Prostate gland (tissue), 2 donors: ENCODE measurements at regions of chr2 and their contacts with region 1.

Region 1: DNA sequence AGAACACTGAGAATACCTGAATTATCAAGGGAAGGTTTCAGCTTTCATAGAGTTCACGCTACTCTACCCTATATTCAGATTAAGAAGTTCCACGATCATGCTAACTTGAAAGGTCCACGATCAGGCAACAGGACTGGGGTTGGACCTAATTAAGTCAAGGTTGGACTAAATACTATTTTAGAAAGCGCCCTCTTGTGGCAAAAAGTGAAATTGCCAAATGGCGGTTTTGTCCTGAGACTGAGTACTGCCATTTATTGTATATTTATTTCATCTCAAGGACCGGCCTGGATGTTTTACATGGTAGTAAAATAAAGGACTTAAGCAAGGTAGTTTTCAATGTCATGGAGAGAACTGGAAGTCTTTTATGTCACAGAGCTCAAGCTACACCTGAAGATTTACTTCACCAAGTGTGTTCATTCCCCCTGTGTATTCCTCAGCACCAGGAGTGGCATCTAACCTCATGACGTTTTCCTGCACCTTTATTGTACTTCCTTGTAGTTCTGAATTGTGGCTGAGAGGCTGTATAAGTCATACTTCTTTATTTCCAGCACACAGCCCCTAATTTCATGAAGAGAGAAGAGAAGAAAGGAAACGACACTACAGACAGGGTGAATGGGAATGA is 56.8 kb downstream of the SRD5A2 start:
- DNase-seq: no peak
- H3K4me3 ChIP-seq: no peak overlapping the region
- H3K27ac ChIP-seq: no peak overlapping the region
- H3K4me1 ChIP-seq: no peaks in the 10 kb centered on the region
- H3K27me3 ChIP-seq: no peaks in the 10 kb centered on the region
- CTCF ChIP-seq: peak in 3 of 4 experiments; percentile 40 to 56 (median 45)
- POLR2A ChIP-seq: no peak

Region 2: DNA sequence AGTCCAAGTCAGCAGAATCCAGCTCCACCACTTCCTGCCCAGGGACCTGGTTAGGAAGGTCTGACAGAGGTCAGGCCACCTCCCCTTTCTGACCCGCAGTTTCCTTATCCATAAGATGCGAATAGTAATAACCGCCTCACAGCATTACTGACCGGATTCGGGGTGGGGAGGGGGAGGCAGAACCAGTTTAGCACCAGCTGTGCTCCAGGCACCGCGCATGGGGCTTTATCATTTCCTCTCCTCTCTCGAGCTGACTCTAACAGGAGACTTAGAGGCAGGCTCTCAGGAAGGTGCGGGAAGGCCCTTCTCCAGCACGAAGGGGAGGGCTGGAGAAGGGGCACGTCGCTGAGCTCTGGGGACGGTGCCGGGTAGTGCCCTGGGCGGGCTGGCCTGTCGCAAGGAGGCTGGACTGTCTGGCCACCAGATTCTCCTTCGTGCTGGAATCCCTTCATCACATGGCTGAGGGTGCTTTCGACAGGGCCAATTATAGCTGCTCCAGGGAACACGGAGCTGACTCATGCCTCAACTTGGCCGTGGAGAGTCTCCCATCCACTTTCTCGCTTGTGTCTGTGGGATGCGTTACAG is 284.3 kb before region 1 on chr2:
- intact Hi-C with region 1: loop called (anchors 5 kb)
- DNase-seq: no peak
- H3K4me3 ChIP-seq: no peak overlapping the region
- H3K27ac ChIP-seq: peak overlapping the region; percentile 30 to 54
- H3K4me1 ChIP-seq: no peaks in the 10 kb centered on the region
- H3K27me3 ChIP-seq: no peaks in the 10 kb centered on the region
- CTCF ChIP-seq: no peak
- POLR2A ChIP-seq: no peak

Region 3: DNA sequence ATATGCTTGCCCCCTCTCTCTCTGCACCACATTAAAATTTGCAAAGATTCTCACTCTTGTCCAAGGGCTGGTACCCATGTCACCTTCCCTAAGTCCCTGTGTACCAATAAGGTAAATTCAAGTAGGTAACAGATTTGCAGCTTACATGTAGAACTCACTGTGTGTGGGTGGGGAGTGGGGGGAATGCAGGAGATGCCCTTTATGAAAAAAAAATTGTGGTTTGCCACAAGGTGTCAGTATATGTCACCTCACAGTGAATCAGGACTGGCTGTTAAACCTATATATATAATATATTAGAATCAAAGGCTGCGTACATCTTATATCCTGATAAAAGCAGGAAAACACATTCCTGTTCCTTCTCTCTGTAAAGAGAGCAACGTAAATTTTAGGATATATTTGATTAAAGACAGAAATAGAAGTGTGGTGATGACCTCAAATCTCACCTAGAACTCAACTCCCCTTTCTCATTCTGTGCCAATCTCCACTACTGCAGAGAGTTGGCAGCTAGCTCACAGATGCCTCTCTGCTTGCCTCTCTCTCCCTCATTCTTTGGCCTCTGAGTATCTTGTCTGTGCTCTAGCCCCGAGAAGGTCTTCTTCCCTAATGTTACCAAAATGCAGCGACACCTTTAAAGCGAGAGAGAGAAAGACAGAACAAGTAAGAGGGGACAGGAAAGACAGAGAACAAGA is 110.0 kb before region 1 on chr2:
- intact Hi-C with region 1: loop called (anchors 10 kb)
- DNase-seq: no peak
- H3K4me3 ChIP-seq: no peak overlapping the region
- H3K27ac ChIP-seq: no peak overlapping the region
- H3K4me1 ChIP-seq: no peaks in the 10 kb centered on the region
- H3K27me3 ChIP-seq: no peaks in the 10 kb centered on the region
- CTCF ChIP-seq: peak in 1 of 4 experiments; percentile 11
- POLR2A ChIP-seq: no peak

Region 4: DNA sequence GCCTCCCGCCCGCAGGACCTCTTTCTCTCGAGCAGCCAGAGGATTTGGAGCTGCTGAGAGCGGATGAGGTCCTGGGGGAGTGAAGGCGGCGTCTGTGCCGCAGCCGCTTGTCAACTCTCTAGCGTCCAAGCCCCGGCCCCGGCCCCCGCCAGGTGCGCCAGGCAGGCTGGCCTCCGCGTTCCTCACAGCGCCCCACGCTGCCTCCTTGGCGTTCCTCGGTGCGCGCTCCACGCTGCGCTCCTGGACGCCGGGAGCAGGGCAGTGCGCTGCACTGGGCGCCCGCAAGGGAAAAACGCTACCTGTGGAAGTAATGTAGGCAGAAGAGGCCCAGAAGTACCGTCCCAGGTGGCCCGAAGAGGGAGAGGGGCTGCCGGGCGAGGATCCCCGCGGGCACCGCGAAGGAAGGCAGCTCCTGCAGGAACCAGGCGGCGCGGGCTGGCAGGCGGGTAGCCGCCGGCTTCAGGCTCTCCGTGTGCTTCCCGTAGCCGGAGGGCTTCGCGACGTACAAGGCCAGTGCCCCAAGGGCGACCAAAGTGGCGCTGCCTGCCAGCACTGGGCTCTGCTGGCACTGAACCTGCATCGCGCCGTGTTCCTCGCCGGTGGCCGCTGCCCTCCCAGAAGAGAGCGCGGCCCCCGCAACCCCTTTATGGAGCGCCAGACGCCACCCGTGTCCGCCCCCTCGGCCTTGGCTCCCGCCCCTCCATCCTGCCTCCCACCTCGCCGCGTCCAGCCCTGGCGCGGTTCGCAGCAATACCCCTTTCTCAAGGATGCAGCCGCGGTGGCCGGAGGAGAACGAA is 56.5 kb after region 1 on chr2 and contains the start of gene SRD5A2:
- intact Hi-C with region 1: loop called (anchors 5 kb)
- DNase-seq: no peak
- H3K4me3 ChIP-seq: peak within 1 kb of the TSS; percentile 39 to 44
- H3K27ac ChIP-seq: peak within 1 kb of the TSS; percentile 75 to 79
- H3K4me1 ChIP-seq: no peaks in the 10 kb centered on the region
- H3K27me3 ChIP-seq: peaks cover 7% of the 10 kb centered on the region
- CTCF ChIP-seq: no peak
- POLR2A ChIP-seq: no peak
- total RNA-seq, gene SRD5A2: 5.0 to 8.5 TPM